ENCODE measurements at regions of chr14 and their contacts with region 1.

Region 1: GRCh38 chr14:103500148-103500990 is 22.3 kb downstream of the CKB start:
- DNase-seq: peak; percentile 28
- H3K4me3 ChIP-seq: no peak overlapping the region
- CTCF ChIP-seq: peak; percentile 91

Region 2: GRCh38 chr14:103483600-103483999 is 16.8 kb before region 1 on chr14:
- CTCF ChIA-PET with region 1: interaction called, 57 read pairs
- POLR2A ChIA-PET with region 1: no interaction called
- DNase-seq: peak; percentile 21
- H3K4me3 ChIP-seq: no peak overlapping the region
- CTCF ChIP-seq: no peak

Region 3: DNA sequence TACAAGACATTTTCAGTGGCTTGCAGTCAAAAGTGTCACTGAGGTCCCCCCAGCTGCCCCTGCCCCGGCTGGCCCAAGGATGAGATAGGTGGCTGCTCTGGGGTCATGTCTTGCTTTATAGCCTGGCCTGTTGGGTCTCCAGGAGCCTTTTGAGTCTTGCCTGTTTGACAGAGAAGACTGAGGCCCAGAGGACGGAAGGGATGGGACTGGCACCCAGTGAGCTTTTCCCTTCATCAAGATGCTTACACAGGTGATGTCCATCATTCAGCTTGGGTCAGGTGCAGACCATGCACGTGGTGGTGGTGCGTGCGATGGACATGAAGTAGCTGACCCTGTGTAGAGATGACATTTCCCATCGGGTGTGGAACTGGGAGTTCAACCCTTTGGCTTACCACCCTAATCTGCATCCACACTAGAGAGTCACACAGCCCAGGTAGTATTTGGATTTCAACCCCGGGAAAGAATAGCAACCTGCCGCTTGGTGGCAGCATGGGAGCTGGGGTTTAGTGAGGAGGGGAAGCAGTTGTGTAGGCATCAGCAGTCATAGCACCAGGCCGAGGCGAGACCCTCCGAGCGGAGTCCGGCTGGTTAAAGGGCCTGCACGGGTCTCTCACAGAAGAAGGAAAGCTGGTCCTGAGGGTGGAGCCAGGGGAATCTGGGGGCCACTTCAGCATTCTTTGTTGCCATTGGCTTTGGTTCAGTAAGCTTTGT is 10.1 kb after region 1 on chr14:
- CTCF ChIA-PET with region 1: interaction called, 61 read pairs
- POLR2A ChIA-PET with region 1: no interaction called
- DNase-seq: no peak
- H3K4me3 ChIP-seq: no peak overlapping the region
- CTCF ChIP-seq: no peak

Region 4: DNA sequence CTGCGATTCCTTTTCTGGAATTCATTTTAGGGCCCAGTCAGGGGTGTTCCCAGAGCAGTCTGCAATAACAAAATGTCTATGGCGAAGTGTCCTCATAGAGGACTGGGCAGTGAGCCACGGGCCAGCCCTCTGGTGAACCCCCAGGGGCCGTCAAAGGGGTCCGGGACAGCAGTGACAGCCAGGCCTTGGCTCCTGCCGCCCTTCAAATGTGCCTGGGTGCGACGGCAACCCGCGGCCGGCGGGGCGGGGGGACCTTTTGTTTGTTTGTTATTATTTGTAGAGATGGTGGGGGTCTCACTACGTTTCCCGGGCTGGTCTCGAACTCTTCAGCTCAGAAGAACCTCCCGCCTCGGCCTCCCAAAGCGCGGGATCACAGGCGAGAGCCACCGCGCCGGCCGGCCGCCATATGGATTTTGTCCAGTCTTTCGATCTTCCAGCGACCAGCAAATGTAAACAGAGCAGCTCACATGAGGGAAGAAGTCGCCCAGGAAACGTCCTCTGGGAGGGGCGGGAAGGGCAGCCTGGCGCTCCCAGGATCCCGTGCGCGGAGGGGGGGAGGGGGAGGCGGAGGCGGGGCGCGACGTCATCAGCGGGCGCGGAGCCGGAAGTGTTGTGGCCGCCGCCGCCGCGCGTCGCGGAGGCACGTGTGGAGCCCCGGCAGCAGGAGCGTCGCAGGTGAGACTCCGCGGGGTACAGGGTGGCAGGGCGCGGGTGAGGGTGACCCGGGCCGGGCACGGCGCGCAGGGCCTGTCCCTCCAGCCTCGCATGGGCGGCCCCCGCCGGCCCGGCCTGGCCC is 28.4 kb after region 1 on chr14 and contains the start of gene TRMT61A:
- CTCF ChIA-PET with region 1: interaction called, 17 read pairs
- POLR2A ChIA-PET with region 1: no interaction called
- DNase-seq: no peak
- H3K4me3 ChIP-seq: peak within 1 kb of the TSS; percentile 93
- CTCF ChIP-seq: no peak